AG04450 (cell line): ENCODE measurements at regions of chr17 and their contacts with region 1.

Region 1: GRCh38 chr17:79082311-79083190 is 7.9 kb downstream of the ENGASE start:
- DNase-seq: no peak
- H3K4me3 ChIP-seq: no peak overlapping the region
- H3K27ac ChIP-seq: no peak overlapping the region
- H3K27me3 ChIP-seq: no peaks in the 10 kb centered on the region
- CTCF ChIP-seq: peak; percentile 86

Region 2: DNA sequence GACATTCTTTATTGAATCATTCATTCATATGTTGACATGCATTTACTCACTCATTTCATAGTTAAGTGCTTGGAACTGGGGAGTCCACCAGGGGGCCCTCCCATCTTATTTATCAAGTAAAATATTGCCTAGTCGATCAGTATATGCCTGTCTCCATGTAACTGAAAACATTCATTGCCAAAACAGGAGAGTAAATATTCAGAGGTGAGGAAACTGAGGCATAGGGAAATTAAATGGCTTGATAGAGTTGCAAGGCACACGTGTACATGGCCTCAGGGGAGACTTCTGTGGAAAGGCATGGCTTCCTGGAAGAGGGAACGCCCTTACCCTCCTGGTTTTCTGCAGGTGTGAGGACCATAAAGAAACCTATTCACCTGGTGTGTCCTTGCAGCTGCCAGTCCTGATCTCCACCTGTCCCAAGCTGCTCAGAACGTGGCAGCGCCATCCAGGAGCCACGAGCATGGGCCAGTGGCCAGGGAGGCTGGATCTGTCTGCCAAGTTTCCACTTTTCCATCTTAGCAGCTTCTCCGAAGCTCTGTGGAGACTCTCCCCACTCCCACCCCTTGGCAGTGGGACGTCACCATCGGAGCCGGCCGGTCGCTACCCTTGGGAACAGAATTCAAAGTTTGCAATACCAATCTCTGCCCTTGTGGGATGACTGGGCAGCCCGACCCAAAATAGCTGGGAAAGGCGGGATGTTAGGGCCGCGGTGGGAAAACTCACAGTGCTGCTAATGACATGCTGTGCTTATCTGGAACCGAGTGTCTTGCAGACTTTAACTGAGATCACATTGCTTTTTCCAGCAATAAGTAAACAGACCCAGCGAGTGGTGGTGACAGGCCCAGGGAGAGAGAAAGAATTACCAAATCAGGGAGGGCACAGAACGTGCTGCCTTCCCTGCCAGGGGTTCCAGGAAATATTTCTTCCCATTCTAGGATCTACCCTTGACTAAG is 62.6 kb before region 1 on chr17:
- CTCF ChIA-PET with region 1: interaction called, 35 read pairs
- POLR2A ChIA-PET with region 1: no interaction called
- DNase-seq: peak; percentile 56
- H3K4me3 ChIP-seq: 0 out of 2 replicates have a peak overlapping the region, but pooled peaks have one; percentile 0
- H3K27ac ChIP-seq: no peak overlapping the region
- H3K27me3 ChIP-seq: peaks cover 3% of the 10 kb centered on the region
- CTCF ChIP-seq: peak; percentile 80

Region 3: GRCh38 chr17:79065105-79065670 is 17.4 kb before region 1 on chr17:
- CTCF ChIA-PET with region 1: interaction called, 19 read pairs
- POLR2A ChIA-PET with region 1: no interaction called
- DNase-seq: no peak
- H3K4me3 ChIP-seq: no peak overlapping the region
- H3K27ac ChIP-seq: no peak overlapping the region
- H3K27me3 ChIP-seq: peaks cover 3% of the 10 kb centered on the region
- CTCF ChIP-seq: peak; percentile 54